Naive thymus-derived CD8-positive, alpha-beta T cell (primary cell): ENCODE measurements at regions of chr15 and their contacts with region 1.

Region 1: GRCh38 chr15:74937596-74938296 is at the start of gene COX5A:
- DNase-seq: peak; percentile 87 to 94 (median 90)
- ATAC-seq: peak; percentile 94 to 96
- H3K4me3 Mint-ChIP-seq: peak within 1 kb of the TSS; percentile 85 to 96 (median 92)
- H3K27ac Mint-ChIP-seq: peak within 1 kb of the TSS; percentile 73 to 97 (median 94)
- H3K4me1 Mint-ChIP-seq: peaks cover 12 to 39% (median 28%) of the 10 kb centered on the region in 4 donors
- H3K27me3 Mint-ChIP-seq: no peaks in the 10 kb centered on the region
- polyA plus RNA-seq, gene COX5A: 268 to 362 (median 276) TPM

Region 2: DNA sequence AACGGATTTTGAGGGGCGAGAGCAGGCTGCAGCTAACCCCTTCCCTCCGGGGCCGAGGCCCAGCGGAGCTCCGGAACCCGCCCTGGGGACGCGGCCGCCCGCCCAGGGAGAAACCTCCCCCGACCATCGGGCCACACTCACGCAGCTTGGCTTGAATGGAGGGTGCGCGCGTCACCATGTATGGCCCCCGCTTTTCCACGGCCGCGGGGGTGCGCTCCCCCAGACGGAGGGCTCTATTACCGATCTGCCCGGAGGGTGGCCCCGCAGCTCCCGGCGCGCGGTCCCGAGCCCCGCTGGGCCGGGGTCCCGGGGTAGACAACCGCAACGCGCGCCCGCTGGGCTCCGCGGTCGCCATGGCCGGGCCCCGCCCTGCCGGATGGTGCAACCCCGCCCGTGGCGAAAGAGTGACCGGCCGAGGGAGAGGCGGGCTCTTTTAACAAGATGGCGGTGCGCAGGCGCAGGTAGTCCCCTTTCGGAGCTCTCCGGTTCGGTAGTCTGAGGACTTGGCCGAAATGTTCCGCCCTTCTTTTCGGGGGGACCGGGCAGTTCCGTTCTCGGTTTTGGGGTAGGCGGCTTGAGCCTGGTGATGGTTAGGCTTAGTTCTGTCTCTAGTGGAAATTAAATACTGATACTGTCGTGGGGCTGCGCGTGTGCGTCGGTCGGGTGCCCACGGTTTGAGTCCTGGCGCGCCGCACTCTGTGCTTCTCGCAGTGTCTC is 31.1 kb before region 1 on chr15 and contains the start of gene FAM219B:
- POLR2A ChIA-PET with region 1: interaction called, 13 read pairs
- DNase-seq: peak; percentile 37 to 85 (median 66)
- ATAC-seq: peak; percentile 79 to 83
- H3K4me3 Mint-ChIP-seq: peak within 1 kb of the TSS; percentile 94 to 99 (median 98)
- H3K27ac Mint-ChIP-seq: peak within 1 kb of the TSS; percentile 93 to 99 (median 97)
- H3K4me1 Mint-ChIP-seq: peaks cover 24 to 46% (median 42%) of the 10 kb centered on the region in 4 donors
- H3K27me3 Mint-ChIP-seq: no peaks in the 10 kb centered on the region
- polyA plus RNA-seq, gene FAM219B: 18.8 to 22.3 (median 20.7) TPM

Region 3: GRCh38 chr15:74917676-74918075 is 20.1 kb before region 1 on chr15:
- POLR2A ChIA-PET with region 1: no interaction called
- DNase-seq: no peak
- ATAC-seq: no peak
- H3K4me3 Mint-ChIP-seq: no peak overlapping the region
- H3K27ac Mint-ChIP-seq: peak overlapping the region in 1 of 10 donors; percentile 24
- H3K4me1 Mint-ChIP-seq: peaks cover 0 to 5% (median 0%) of the 10 kb centered on the region in 4 donors
- H3K27me3 Mint-ChIP-seq: no peaks in the 10 kb centered on the region

Region 4: DNA sequence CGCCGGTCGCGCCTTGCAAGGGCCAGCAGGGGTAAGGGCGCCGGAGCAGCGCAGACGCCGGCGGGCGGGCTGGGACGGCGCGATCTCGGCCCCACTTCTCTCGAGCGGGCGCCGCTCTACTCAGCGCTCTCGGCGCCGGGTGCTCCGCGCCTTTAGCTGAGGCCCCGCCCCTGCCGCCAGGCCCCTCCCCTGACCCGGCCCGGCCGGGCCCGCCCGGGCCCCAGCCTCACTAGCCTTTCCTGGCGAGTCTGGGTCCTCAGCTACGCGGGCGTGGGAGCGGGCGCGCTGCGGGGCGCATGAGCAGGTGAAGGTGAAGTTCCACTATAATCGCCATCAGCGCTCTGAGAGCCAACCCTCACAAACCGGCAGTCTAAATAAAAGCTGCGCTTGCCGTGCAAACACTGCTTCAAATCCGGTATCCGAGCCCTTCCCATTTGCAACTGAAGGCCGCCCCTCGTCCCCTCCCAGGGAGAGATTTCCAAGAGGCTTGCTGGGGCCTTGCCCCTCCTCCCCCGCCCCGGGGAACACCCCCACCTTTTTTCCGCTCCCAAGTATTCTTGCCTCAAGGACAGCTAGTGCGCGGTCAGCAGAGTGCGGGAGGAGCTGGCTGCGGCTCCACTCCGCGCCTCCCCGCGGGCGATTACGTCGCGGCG is 19.0 kb after region 1 on chr15 and contains the start of gene RPP25:
- POLR2A ChIA-PET with region 1: interaction called, 10 read pairs
- DNase-seq: peak; percentile 18 to 77 (median 51)
- ATAC-seq: peak; percentile 85 to 88
- H3K4me3 Mint-ChIP-seq: peak within 1 kb of the TSS; percentile 71 to 86 (median 80)
- H3K27ac Mint-ChIP-seq: peak within 1 kb of the TSS in 2 of 10 donors; percentile 15 to 37
- H3K4me1 Mint-ChIP-seq: peaks cover 9 to 40% (median 33%) of the 10 kb centered on the region in 4 donors
- H3K27me3 Mint-ChIP-seq: peaks cover 10 to 33% (median 29%) of the 10 kb centered on the region in 5 donors
- polyA plus RNA-seq, gene RPP25: 2.8 to 4.3 (median 4.2) TPM

Region 5: DNA sequence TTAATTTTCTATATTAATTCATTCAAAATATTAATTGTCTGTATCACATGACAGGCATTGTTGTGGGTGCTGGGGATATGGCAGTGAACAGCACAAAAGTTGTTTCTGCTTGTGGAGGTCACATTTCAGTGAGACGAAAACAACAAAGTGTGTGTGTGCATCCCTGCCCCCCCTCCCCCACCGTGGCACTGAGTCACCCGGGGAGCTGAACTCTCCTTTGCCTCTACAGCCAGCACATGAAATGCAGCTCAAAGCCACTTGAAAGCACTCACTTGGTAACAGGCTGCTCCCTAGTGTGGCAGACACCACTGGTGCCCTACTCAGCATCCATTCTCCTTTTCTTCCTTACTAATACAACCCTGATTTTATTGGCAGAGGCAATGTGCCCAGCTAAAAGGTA is 40.8 kb after region 1 on chr15:
- POLR2A ChIA-PET with region 1: no interaction called
- DNase-seq: peak in 2 of 10 donors; percentile 51 to 67
- ATAC-seq: peak; percentile 62 to 73
- H3K4me3 Mint-ChIP-seq: no peak overlapping the region
- H3K27ac Mint-ChIP-seq: no peak overlapping the region
- H3K4me1 Mint-ChIP-seq: peaks cover 0 to 3% (median under 1%) of the 10 kb centered on the region in 4 donors
- H3K27me3 Mint-ChIP-seq: peaks cover under 1 to 11% (median 10%) of the 10 kb centered on the region in 5 donors